Heart left ventricle (tissue), 16 donors: ENCODE measurements at regions of chr16 and their contacts with region 1.

Region 1: DNA sequence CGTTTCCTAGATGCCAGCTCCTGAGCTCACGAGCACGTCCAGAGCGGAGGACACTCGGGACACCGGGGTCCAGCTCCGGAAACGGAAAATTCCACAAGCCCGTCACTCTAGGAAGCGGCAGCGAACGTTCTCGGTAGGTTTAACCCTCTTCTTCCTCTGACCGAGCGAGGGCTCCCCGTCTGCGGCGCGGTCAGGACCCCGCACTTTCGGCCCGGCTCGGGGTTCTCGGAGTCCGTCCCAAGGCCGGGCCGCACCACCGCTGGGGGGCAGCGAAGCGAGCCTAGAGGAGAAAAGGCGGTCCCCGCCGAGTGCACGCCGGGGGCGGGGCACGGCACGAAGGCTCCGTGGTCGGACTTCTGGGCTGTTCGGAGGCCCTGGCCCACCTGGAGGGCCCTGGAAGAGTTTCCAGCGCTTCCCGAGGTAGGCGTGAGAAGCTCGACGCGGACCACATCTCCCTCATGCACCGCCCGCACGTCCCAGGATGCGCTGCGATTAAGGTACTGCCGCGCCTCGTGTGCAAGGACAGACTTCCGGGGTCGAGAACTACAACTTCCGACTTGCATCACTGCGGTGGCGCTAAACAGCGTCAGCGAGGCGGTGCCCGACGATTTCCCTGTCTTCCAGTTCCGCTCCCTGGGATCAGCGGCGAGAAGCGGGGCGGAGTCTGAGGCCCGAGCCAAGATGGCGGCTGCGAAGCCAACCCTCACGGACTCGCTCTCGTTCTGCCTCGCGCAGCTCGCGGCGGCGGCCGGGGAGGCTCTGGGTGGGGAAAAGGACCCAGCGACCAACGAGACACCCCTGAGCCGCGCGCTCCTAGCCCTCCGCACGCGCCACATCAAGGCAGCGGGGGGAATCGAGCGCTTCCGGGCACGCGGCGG is at the start of gene ARMC5:
- DNase-seq: peak; percentile 98 to 99 (median 98)
- ATAC-seq: peak; percentile 82 to 90 (median 88)
- H3K4me3 ChIP-seq: peak within 1 kb of the TSS; percentile 57 to 93 (median 80)
- H3K27ac ChIP-seq: peak within 1 kb of the TSS; percentile 94 to 100 (median 99)
- H3K4me1 ChIP-seq: peaks cover 0 to 57% (median 43%) of the 10 kb centered on the region in 12 donors
- H3K27me3 ChIP-seq: no peaks in the 10 kb centered on the region
- CTCF ChIP-seq: peak; percentile 39 to 83 (median 62)
- POLR2A ChIP-seq: peak in 1 of 2 donors; percentile 19
- total RNA-seq, gene ARMC5: 4.1 to 9.2 (median 6.5) TPM

Region 2: DNA sequence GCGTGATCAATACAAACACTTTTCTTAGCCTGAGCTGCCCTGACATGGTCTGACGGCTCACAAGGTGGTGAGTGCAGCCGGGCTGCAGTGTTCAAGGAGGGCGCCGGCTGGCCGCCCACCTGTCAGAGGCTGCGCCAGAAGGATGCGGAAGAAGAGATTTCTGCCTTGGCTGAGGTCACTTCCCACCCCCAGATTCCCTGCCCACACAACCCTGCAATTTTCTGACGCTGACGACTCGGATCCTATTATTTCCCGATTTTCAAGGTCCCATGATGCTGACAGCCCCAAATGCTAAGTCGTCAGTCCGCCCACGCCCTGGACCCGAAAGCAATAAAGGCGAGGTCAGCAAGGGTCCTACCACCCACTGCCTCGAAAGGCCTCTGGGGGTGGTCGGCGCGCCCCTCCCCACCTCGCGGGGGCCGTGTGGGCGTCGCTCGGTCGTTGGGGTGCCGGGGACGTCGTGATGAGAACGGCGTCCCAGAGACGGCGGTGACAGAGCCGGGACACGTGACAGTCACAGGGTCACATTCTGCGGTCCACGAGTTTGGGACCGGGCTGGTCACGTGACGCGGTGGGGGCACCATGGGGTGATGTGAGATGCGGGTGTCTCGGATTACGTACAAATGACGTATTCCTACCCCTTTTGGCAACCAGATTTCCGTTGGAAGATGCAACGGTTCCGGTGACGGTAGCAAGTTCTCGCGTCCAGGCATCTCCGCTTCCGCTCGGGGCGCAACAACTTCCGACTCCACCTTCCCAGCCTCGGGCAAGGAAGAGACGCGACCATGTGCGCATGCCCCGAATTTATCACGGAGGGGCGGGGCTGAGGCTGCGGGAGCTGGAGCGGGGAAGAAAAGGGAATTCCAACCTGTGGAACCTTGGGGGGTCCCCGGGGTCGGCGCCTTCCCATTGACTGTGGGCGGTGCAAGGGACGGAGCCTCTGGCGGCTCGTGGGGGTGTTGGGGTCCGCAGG is 426.1 kb before region 1 on chr16 and contains the start of gene STX4:
- intact Hi-C with region 1: loop called in 2 of 10 experiments (anchors 1 to 5 kb)
- DNase-seq: peak; percentile 98 to 99 (median 98)
- ATAC-seq: peak; percentile 93 to 95 (median 94)
- H3K4me3 ChIP-seq: peak within 1 kb of the TSS; percentile 73 to 100 (median 90)
- H3K27ac ChIP-seq: peak within 1 kb of the TSS; percentile 91 to 99 (median 96)
- H3K4me1 ChIP-seq: peaks cover 4 to 31% (median 18%) of the 10 kb centered on the region in 12 donors
- H3K27me3 ChIP-seq: no peaks in the 10 kb centered on the region
- CTCF ChIP-seq: no peak
- POLR2A ChIP-seq: no peak
- total RNA-seq, gene STX4: 19.5 to 65.8 (median 39.7) TPM

Region 3: DNA sequence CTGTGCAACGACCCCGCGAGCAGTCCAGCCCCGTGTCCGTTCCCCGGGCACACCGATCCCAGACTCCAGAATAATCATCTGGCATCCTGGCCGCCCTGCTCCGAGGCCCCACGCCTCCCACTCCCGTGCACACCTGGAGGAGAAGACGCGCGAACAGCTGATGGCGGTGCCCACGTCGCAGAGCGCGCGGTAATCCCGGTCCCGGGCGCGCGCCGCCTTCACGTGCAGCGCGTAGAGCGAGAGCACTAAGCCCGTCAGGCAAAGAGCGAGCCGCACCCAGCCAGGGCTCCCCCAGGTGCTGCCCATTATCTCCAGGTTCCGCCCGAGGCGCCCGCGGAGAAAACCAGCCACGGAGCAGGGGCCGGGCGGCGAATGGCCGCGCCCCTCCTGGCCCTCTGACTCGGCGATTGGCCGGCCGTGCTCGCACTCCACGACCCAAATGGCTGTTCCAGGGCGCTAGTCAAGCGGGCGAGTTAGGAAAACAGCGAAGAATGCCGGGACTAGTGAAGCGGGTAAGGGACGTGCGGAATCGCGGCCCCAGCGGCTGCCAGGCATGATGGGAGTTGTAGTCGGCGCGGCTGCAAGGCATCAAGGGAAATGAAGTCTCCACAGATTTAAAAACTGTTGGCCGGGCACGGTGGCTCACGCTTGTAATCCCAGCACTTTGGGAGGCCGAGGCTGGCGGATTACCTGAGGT is 364.5 kb before region 1 on chr16 and contains the start of gene VKORC1:
- intact Hi-C with region 1: loop called in 1 of 10 experiments (anchors 10 kb)
- DNase-seq: peak; percentile 95 to 97 (median 96)
- ATAC-seq: peak; percentile 92 to 98 (median 96)
- H3K4me3 ChIP-seq: peak within 1 kb of the TSS; percentile 72 to 95 (median 84)
- H3K27ac ChIP-seq: peak within 1 kb of the TSS; percentile 44 to 93 (median 88)
- H3K4me1 ChIP-seq: peaks cover 0 to 26% (median 18%) of the 10 kb centered on the region in 12 donors
- H3K27me3 ChIP-seq: no peaks in the 10 kb centered on the region
- CTCF ChIP-seq: no peak
- POLR2A ChIP-seq: peak in 1 of 2 donors; percentile 72
- total RNA-seq, gene VKORC1: 25.9 to 63.1 (median 42.0) TPM

Region 4: DNA sequence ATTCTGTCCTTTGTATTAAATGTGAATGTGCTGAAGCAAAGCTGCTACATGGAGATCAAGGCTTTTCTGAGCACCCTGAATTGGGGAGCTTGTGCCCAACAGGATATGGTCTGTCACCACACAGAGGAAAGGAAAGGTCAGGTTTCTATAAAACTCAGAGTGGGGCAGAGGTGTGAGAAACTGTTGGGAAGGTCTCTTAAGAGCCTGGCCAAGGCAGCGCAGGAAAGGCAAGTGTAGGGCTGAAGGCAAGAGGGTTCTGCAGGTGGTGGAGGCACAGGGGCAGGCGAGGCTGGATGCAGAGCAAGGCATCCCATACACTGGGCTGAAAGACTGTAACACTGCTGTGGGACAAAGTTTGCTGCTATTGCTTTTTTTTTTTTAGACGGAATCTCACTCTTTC is 39.0 kb before region 1 on chr16:
- intact Hi-C with region 1: no loop called
- DNase-seq: no peak
- ATAC-seq: no peak
- H3K4me3 ChIP-seq: no peak overlapping the region
- H3K27ac ChIP-seq: no peak overlapping the region
- H3K4me1 ChIP-seq: peaks cover 0 to 9% (median 0%) of the 10 kb centered on the region in 12 donors
- H3K27me3 ChIP-seq: peaks cover 0 to 2% (median 0%) of the 10 kb centered on the region in 9 donors
- CTCF ChIP-seq: no peak
- POLR2A ChIP-seq: no peak

Region 5: DNA sequence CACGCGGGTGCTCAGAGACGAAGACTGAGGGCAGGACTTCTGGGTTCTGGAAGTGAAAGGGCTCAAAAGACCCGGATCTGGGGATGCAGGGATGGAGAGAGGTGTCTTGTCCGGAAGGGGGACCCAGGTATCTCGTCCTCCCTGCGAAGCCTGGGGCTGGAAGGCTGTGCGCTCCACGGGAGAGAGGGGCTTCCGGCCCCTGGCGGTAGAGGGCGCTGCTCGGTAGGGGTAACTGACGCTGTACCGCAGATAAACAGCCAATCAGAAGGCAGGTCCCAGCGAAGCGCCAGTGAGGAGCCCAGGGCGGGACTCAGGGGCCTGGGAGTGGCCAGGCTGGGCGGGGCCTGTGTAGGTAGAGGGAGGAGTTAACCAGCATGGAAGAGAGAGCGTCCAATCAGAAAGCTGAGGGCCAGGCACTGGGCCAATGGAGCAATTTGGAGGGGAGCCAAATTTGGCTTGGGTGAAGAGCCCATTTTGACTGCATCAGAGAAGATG is 13.7 kb after region 1 on chr16:
- intact Hi-C with region 1: loop called in 2 of 10 experiments (anchors 1 to 2 kb)
- DNase-seq: peak; percentile 90 to 94 (median 92)
- ATAC-seq: peak; percentile 88 to 94 (median 91)
- H3K4me3 ChIP-seq: peak overlapping the region; percentile 45 to 86 (median 68)
- H3K27ac ChIP-seq: peak overlapping the region; percentile 75 to 97 (median 90)
- H3K4me1 ChIP-seq: peaks cover 0 to 31% (median 14%) of the 10 kb centered on the region in 12 donors
- H3K27me3 ChIP-seq: peaks cover 0 to 2% (median 0%) of the 10 kb centered on the region in 9 donors
- CTCF ChIP-seq: peak; percentile 48 to 92 (median 65)
- POLR2A ChIP-seq: peak in 1 of 2 donors; percentile 24

Region 6: DNA sequence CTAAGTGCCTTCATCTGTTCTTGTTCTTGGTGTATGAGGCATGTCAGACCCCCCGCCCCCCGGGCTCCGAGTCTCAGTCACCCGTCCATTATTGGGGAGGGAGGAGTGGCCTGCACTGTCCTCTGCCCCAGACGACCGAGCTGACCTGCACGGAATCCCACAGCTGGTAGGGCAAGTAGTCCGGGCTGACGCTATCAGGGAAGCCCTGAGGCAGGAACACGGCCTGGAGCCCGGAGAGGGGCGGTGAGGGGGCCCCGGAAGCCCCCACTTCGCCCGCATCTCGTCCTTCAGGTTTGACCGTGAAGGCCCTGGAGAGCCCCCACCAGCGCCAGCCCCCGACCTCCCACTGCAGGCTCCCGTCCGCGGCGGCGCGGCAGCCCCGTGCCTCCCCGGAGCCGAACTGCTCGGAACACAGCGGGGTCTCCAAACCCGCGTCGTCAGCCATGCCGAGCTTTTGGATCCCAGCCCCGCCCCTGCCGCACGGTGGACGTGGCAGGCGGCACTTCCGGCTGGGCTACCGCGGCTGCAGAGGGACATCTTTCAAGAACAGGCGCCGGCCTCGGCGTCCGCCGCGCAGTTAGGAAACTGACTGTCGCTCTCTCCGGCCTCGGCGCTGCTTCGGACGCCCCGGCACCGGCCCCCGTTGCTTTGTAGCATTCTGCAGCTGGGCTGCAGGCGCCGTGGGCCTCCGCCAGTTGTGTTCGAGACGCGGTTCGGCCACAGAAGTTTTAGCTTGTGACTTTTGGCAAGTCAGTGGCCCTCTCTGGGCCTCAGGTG is 49.0 kb after region 1 on chr16 and contains the start of gene RUSF1:
- intact Hi-C with region 1: loop called in 4 of 10 experiments (anchors 1 to 10 kb)
- DNase-seq: peak; percentile 93 to 96 (median 94)
- ATAC-seq: peak; percentile 89 to 97 (median 96)
- H3K4me3 ChIP-seq: peak within 1 kb of the TSS; percentile 73 to 100 (median 86)
- H3K27ac ChIP-seq: peak within 1 kb of the TSS; percentile 82 to 98 (median 94)
- H3K4me1 ChIP-seq: peaks cover 4 to 58% (median 48%) of the 10 kb centered on the region in 12 donors
- H3K27me3 ChIP-seq: no peaks in the 10 kb centered on the region
- CTCF ChIP-seq: peak in 1 of 12 donors; percentile 10
- POLR2A ChIP-seq: peak in 1 of 2 donors; percentile 76
- total RNA-seq, gene RUSF1: 17.8 to 32.5 (median 21.2) TPM

Region 7: DNA sequence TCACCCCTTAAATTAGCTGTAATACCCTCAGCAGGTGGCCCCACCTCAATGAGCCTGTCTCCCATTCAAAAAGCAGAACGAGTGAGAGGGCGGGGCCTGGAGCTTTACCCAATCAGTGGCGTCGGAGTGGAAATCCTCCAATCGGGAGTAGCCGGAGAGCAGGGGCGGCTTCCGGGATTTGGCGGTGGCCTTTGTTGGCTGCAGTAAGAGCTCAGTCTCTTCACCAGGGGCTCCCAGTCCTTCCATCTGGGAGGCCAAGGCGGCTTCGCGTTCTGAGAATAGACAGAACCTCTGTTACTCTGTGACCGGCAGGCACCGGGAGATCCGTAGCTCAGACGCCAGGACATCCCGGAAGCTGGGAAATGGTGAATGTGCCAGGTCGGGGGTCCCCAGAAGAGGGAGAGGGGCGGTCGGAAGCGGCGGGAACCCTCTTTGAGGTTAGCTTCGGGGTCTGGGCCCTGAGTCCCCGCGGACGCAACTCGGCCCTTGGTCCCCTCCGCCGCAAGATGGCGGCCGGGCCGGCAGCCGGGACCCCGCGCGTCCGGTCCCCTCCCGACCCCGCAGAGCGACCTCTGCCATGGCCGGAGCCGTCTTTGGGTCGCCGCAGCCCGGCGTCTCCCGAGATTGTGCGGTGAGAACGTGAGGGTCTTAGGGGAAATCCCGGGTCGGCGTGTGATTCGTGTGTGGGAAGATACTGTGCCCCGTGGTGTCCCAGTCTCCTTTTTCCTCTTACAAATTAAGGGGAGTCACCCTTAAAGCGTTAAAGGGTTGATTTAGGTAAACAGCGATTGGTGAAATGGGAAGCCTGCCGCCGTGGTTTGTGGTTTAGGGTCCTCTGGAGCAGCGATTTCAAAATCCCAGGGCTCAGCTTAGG is 254.2 kb after region 1 on chr16:
- intact Hi-C with region 1: loop called in 1 of 10 experiments (anchors 10 kb)
- DNase-seq: peak; percentile 93 to 96 (median 94)
- ATAC-seq: peak; percentile 94 to 98 (median 96)
- H3K4me3 ChIP-seq: peak overlapping the region; percentile 75 to 100 (median 88)
- H3K27ac ChIP-seq: peak overlapping the region; percentile 82 to 99 (median 96)
- H3K4me1 ChIP-seq: peaks cover 0 to 26% (median 15%) of the 10 kb centered on the region in 12 donors
- H3K27me3 ChIP-seq: no peaks in the 10 kb centered on the region
- CTCF ChIP-seq: peak in 1 of 12 donors; percentile 7
- POLR2A ChIP-seq: peak; percentile 75 to 93

Region 8: GRCh38 chr16:31873556-31874365 is 414.7 kb after region 1 on chr16 and contains the start of gene ZNF267:
- intact Hi-C with region 1: loop called in 6 of 10 experiments (anchors 5 to 10 kb)
- DNase-seq: peak; percentile 95 to 97 (median 96)
- ATAC-seq: peak; percentile 91 to 97 (median 94)
- H3K4me3 ChIP-seq: peak within 1 kb of the TSS; percentile 72 to 100 (median 94)
- H3K27ac ChIP-seq: peak within 1 kb of the TSS; percentile 24 to 98 (median 86)
- H3K4me1 ChIP-seq: peaks cover 3 to 74% (median 29%) of the 10 kb centered on the region in 12 donors
- H3K27me3 ChIP-seq: no peaks in the 10 kb centered on the region
- CTCF ChIP-seq: no peak
- POLR2A ChIP-seq: peak in 1 of 2 donors; percentile 71
- total RNA-seq, gene ZNF267: 3.1 to 22.6 (median 5.3) TPM